ENCODE measurements at regions of chr14 and their contacts with region 1.

Region 1: DNA sequence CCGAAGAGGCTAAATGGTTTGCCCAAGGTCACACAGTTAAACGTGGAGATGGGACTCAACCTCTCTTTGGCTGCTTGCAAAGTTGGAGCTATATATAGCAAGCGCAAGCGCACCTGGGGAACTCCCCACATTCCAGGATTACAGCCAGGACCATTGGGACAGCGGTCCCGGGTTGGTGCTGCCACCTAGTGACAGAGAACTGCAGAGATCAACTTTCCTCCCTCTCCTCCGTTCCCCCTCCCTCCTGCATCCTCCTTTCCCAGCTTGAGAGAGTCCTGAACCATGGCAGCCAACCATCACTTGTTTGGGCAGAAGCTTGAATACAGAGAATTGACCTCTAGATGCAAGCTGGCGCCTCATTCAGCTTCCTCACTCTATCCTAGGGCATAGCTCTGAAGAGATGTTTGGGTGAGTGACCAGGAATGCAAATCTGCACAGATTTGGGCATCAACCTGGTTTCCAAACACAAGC is 17.4 kb upstream of the FLVCR2 start:
- DNase-seq: peak; percentile 60
- ATAC-seq: peak; percentile 54
- H3K4me3 Mint-ChIP-seq: no peak overlapping the region
- H3K27ac Mint-ChIP-seq: no peak overlapping the region
- H3K4me1 Mint-ChIP-seq: peaks cover 54% of the 10 kb centered on the region
- H3K27me3 Mint-ChIP-seq: no peaks in the 10 kb centered on the region

Region 2: GRCh38 chr14:75307700-75308379 is 253.2 kb before region 1 on chr14:
- CTCF ChIA-PET with region 1: interaction called, 13 read pairs
- POLR2A ChIA-PET with region 1: no interaction called
- DNase-seq: peak; percentile 81
- ATAC-seq: peak; percentile 80
- H3K4me3 Mint-ChIP-seq: no peak overlapping the region
- H3K27ac Mint-ChIP-seq: no peak overlapping the region
- H3K4me1 Mint-ChIP-seq: peaks cover 26% of the 10 kb centered on the region
- H3K27me3 Mint-ChIP-seq: peaks cover 3% of the 10 kb centered on the region

Region 3: GRCh38 chr14:75383721-75384120 is 177.3 kb before region 1 on chr14:
- CTCF ChIA-PET with region 1: no interaction called
- POLR2A ChIA-PET with region 1: no interaction called
- DNase-seq: no peak
- ATAC-seq: no peak
- H3K4me3 Mint-ChIP-seq: no peak overlapping the region
- H3K27ac Mint-ChIP-seq: no peak overlapping the region
- H3K4me1 Mint-ChIP-seq: no peaks in the 10 kb centered on the region
- H3K27me3 Mint-ChIP-seq: peaks cover 35% of the 10 kb centered on the region

Region 4: GRCh38 chr14:75440733-75441477 is 120.1 kb before region 1 on chr14:
- CTCF ChIA-PET with region 1: no interaction called
- POLR2A ChIA-PET with region 1: no interaction called
- DNase-seq: no peak
- ATAC-seq: peak; percentile 15
- H3K4me3 Mint-ChIP-seq: no peak overlapping the region
- H3K27ac Mint-ChIP-seq: no peak overlapping the region
- H3K4me1 Mint-ChIP-seq: peaks cover 11% of the 10 kb centered on the region
- H3K27me3 Mint-ChIP-seq: peaks cover 2% of the 10 kb centered on the region

Region 5: GRCh38 chr14:75514673-75515628 is 46.0 kb before region 1 on chr14:
- CTCF ChIA-PET with region 1: interaction called, 58 read pairs
- POLR2A ChIA-PET with region 1: interaction called, 3 read pairs
- DNase-seq: peak; percentile 61
- ATAC-seq: peak; percentile 77
- H3K4me3 Mint-ChIP-seq: peak overlapping the region; percentile 79
- H3K27ac Mint-ChIP-seq: peak overlapping the region; percentile 95
- H3K4me1 Mint-ChIP-seq: peaks cover 36% of the 10 kb centered on the region
- H3K27me3 Mint-ChIP-seq: no peaks in the 10 kb centered on the region

Region 6: DNA sequence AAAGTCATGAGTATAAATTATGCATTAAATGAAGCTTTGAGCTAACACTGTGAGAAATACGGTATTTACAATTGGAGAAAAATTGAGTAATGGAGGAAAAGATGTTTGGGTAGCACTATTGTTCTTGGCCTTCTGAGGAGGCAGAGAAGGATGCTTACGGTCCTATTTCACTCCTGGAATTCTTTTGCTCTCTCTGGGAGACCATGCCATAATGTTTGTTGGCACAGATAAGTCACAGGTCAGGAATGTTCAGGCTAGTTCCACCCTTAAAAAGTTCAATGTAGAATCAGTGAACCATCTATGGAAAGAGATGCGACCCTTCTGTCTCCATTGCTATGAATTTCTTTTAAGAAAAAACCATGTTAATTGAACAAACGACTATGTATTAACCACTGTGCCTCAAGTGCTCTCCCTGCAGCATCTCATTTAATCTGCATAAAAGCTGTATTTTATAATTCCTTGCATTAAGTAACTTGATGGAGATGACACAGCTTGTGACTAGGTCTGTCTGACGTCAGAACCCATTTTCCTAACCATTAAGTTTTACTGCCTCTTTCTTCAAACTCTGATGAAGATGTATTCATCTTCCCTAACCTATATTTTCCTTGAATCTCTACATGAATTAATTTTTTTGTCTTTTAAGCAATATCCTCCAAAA is 29.2 kb before region 1 on chr14:
- CTCF ChIA-PET with region 1: interaction called, 13 read pairs
- POLR2A ChIA-PET with region 1: no interaction called
- DNase-seq: no peak
- ATAC-seq: no peak
- H3K4me3 Mint-ChIP-seq: no peak overlapping the region
- H3K27ac Mint-ChIP-seq: peak overlapping the region; percentile 15
- H3K4me1 Mint-ChIP-seq: peaks cover 26% of the 10 kb centered on the region
- H3K27me3 Mint-ChIP-seq: no peaks in the 10 kb centered on the region

Region 7: DNA sequence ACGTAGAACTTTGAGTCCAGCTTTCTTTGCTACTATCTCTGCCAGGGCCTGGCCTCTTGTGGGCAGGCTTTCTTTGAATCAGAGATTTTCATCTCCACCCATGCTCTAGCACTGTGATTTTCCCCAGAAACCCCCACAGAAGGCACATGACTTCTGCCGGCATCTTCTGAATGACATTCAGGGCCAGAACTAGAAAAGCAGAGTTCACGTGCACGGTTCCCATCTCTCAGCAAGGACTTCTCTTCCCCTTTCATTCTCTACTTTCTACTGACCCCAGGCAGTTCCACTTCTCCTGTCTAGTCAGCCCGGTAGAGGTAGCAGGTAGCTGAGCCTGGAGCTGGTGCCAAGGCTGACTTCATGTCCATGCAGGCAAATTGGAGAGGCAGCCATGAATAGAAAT is 11.8 kb before region 1 on chr14:
- CTCF ChIA-PET with region 1: interaction called, 18 read pairs
- POLR2A ChIA-PET with region 1: interaction called, 3 read pairs
- DNase-seq: no peak
- ATAC-seq: no peak
- H3K4me3 Mint-ChIP-seq: no peak overlapping the region
- H3K27ac Mint-ChIP-seq: no peak overlapping the region
- H3K4me1 Mint-ChIP-seq: peaks cover 25% of the 10 kb centered on the region
- H3K27me3 Mint-ChIP-seq: no peaks in the 10 kb centered on the region

Region 8: GRCh38 chr14:75609606-75610471 is 48.8 kb after region 1 on chr14:
- CTCF ChIA-PET with region 1: no interaction called
- POLR2A ChIA-PET with region 1: no interaction called
- DNase-seq: no peak
- ATAC-seq: no peak
- H3K4me3 Mint-ChIP-seq: no peak overlapping the region
- H3K27ac Mint-ChIP-seq: no peak overlapping the region
- H3K4me1 Mint-ChIP-seq: no peaks in the 10 kb centered on the region
- H3K27me3 Mint-ChIP-seq: peaks cover 3% of the 10 kb centered on the region